IMR-90 (cell line): ENCODE measurements at regions of chr11 and their contacts with region 1.

Region 1: DNA sequence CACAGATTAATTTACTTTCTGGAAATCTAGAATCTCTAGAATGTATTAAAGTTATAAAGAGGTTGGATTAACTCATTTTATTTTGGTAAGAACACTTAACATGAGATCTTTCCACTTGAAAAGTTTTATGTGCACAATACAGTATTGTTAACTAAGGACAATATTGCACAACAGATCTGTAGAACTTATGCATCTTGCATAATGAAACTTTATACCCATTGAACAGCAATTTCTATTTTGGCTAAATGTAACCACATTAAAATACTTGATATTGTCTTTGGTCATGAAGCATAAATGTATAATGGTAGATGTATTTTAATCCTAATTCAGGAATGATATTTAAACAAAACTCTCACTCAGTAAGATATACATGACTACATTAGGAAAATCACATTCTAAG is 203.8 kb downstream of the SNX19 start:
- DNase-seq: no peak
- ATAC-seq: no peak
- H3K4me3 ChIP-seq: no peak overlapping the region
- H3K27ac ChIP-seq: no peak overlapping the region
- H3K4me1 ChIP-seq: peaks cover 18% of the 10 kb centered on the region
- H3K27me3 ChIP-seq: no peaks in the 10 kb centered on the region; the same call in 1 of the 2 replicates
- CTCF ChIP-seq: no peak
- POLR2A ChIP-seq: no peak
- RAD21 ChIP-seq: no peak

Region 2: DNA sequence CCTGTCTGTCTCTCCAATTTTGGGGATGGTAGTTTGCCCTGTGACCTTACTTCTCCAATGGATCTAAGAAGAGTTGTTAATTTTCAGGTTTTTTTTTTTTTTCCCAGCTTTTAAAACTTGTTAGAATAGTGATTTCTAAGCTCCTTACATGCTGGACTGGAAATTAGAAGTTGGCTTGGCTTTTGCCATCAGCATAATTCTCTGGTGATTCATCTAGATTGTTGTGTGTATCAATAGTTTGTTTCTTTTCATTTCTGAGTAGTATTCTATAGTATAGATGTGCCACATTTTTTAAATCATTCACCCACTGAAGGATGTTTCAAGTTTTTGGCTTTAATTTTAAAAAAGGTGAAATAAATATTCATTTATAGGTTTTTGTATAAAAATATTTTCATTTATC is 212.7 kb before region 1 on chr11:
- CTCF ChIA-PET with region 1: no interaction called
- POLR2A ChIA-PET with region 1: no interaction called
- dilution Hi-C with region 1: no loop called
- in situ Hi-C with region 1: no loop called
- intact Hi-C with region 1: loop called (anchors 1 kb)
- DNase-seq: peak; percentile 56
- ATAC-seq: peak; percentile 77
- H3K4me3 ChIP-seq: no peak overlapping the region
- H3K27ac ChIP-seq: no peak overlapping the region
- H3K4me1 ChIP-seq: peaks cover 4% of the 10 kb centered on the region
- H3K27me3 ChIP-seq: no peaks in the 10 kb centered on the region
- CTCF ChIP-seq: no peak
- POLR2A ChIP-seq: no peak
- RAD21 ChIP-seq: no peak